Heart right ventricle (tissue), 16 donors: ENCODE measurements at regions of chr12 and their contacts with region 1.

Region 1: DNA sequence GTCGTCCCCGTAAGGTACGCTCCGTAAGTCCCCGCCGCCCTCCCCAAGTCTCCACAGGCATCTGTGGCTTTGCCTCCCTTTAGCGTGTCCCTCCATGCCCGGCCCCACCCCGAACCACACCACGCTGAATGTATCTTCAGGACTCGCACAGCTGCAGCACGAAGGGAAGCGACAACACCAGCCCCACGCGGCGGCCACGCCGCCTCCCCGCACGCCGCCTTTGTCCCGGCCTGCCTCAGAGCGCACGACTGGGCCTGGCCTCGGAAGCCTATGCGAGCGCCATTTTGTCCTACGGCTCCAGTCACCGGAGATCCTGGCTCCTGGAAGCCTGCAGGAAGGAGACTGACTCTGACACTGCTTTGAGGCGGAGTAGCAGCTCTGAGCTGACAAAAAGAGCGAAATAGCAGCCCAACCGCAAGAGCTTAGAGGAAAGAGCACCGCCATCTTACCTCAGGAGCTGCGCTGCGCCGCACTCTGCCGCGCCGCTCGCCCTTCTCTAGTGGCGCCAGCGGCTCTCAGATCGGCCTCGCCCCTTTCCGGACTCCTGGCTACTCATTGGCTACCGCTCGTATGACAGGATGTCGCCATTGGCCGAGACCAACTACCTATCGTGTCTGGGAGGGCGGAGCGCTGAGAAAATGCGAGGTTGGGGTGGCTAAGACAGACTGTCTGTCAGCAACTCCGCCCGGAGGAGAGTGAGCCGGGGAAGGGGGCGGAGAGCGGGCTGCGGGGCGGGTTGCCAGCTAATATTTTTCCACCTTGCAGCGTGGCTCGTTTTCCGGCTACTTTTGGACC is at the start of gene KANSL2:
- DNase-seq: peak; percentile 96 to 99
- ATAC-seq: peak; percentile 97 to 100 (median 99)
- H3K4me3 ChIP-seq: peak within 1 kb of the TSS; percentile 72 to 98 (median 86)
- H3K27ac ChIP-seq: peak within 1 kb of the TSS; percentile 89 to 99 (median 95)
- H3K4me1 ChIP-seq: peaks cover 3 to 51% (median 48%) of the 10 kb centered on the region in 9 donors
- H3K27me3 ChIP-seq: no peaks in the 10 kb centered on the region
- CTCF ChIP-seq: peak in 1 of 9 donors; percentile 8
- total RNA-seq, gene KANSL2: 17.3 to 30.7 (median 20.7) TPM

Region 2: DNA sequence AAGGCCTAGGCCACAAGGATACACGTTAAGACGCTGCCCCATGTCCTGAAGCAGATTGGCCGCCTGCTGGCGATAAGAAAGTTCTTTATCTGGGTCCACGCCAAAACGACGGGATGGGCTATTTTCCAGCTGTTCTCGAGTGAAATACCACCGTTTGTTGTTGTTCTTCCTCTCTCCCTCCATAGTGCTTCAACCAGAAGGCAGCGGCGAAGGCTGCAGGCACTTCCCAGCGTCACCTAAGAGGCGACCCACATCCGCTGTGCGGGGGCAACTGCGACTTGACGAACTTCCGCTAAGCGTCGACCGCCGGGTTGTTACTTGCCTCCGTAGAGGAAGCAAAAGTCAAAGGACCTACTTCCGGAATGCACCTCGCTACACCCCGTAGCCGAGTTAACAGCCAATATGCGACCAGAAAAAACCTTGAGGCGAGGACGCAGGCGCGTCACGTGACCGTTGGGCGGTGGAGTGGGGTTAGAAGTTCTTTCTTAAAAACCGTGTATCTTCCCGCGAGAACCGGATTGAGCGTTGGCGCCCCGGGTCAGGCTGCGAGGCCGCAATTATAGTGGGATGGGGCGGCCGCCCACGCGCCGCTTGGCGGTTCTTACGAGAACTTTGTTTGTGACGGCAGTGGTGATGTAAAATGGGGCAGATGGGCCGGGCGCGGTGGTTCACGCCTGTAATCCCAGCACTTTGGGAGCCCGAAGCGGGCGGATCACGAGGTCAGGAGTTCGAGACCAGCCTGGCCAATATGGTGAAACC is 34.7 kb after region 1 on chr12 and contains the start of gene CCNT1:
- intact Hi-C with region 1: loop called in 1 of 10 experiments (anchors 1 kb)
- DNase-seq: peak; percentile 97 to 99
- ATAC-seq: peak; percentile 98 to 99 (median 98)
- H3K4me3 ChIP-seq: peak within 1 kb of the TSS; percentile 50 to 86 (median 74)
- H3K27ac ChIP-seq: peak within 1 kb of the TSS; percentile 68 to 97 (median 91)
- H3K4me1 ChIP-seq: peaks cover 10 to 42% (median 30%) of the 10 kb centered on the region in 9 donors
- H3K27me3 ChIP-seq: no peaks in the 10 kb centered on the region
- CTCF ChIP-seq: peak in 4 of 9 donors; percentile 8 to 31 (median 28)
- total RNA-seq, gene CCNT1: 17.6 to 27.2 (median 23.0) TPM

Region 3: GRCh38 chr12:48728807-48729206 is 46.9 kb after region 1 on chr12:
- intact Hi-C with region 1: no loop called
- DNase-seq: no peak
- ATAC-seq: no peak
- H3K4me3 ChIP-seq: no peak overlapping the region
- H3K27ac ChIP-seq: no peak overlapping the region
- H3K4me1 ChIP-seq: no peaks in the 10 kb centered on the region
- H3K27me3 ChIP-seq: no peaks in the 10 kb centered on the region
- CTCF ChIP-seq: no peak

Region 4: GRCh38 chr12:48788854-48789796 is 107.2 kb after region 1 on chr12 and contains the start of gene ADCY6:
- intact Hi-C with region 1: loop called in 1 of 10 experiments (anchors 5 kb)
- DNase-seq: peak; percentile 86 to 89
- ATAC-seq: peak; percentile 51 to 80 (median 70)
- H3K4me3 ChIP-seq: peak within 1 kb of the TSS; percentile 75 to 99 (median 98)
- H3K27ac ChIP-seq: peak within 1 kb of the TSS; percentile 94 to 99 (median 98)
- H3K4me1 ChIP-seq: peaks cover 7 to 49% (median 42%) of the 10 kb centered on the region in 9 donors
- H3K27me3 ChIP-seq: peaks cover 0 to 29% (median 0%) of the 10 kb centered on the region in 7 donors
- CTCF ChIP-seq: no peak
- total RNA-seq, gene ADCY6: 84.4 to 144 (median 122) TPM